Activated CD4-positive, alpha-beta memory T cell treated with anti-CD3 and anti-CD28 coated beads for 36 hours (primary cell): ENCODE measurements at regions of chr10 and their contacts with region 1.

Region 1: DNA sequence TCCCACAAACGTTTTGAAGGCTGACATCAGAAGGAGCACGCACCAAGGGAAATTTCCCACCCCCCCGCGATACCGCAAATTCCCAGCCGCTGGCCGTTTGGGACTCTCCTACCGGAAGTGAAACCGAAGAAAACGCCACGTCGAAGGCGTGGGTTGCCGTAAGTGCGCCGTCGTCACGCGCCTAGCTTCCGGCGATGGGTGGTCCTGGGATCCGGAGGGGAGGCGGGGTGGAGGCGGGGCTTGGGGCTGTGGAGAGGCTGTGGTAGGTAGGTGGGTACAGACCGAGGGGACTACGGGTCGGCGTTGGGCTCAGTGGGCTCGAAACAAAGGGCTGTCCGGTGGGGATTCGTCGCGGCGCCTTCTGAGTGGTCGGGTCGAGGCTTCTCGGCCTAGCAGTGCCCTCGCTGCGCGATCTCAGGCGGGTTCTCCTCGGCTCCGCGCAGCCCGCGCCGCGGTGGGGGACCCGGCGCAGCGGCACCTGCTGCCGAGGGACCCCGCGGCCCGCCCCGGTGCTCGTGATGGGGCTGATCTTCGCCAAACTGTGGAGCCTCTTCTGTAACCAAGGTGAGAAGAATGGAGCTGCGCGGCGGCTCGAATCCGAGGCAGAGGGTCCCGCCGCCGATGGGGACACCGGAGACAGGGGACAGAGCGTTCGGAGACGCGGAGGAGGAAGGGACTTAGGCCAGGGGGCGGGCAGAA is at the start of gene ARL5B:
- DNase-seq: peak; percentile 98
- H3K4me3 Mint-ChIP-seq: peak within 1 kb of the TSS; percentile 95
- H3K27ac Mint-ChIP-seq: peak within 1 kb of the TSS; percentile 92
- H3K4me1 Mint-ChIP-seq: peaks cover 34% of the 10 kb centered on the region
- H3K27me3 Mint-ChIP-seq: no peaks in the 10 kb centered on the region
- total RNA-seq, gene ARL5B: 16.2 to 16.3 TPM

Region 2: GRCh38 chr10:17200912-17201793 is 1458.1 kb before region 1 on chr10 and contains the start of gene TRDMT1:
- CTCF ChIA-PET with region 1: no interaction called
- POLR2A ChIA-PET with region 1: no interaction called
- intact Hi-C with region 1: loop called (anchors 10 kb)
- DNase-seq: peak; percentile 82
- H3K4me3 Mint-ChIP-seq: peak within 1 kb of the TSS; percentile 94
- H3K27ac Mint-ChIP-seq: peak within 1 kb of the TSS; percentile 91
- H3K4me1 Mint-ChIP-seq: peaks cover 46% of the 10 kb centered on the region
- H3K27me3 Mint-ChIP-seq: no peaks in the 10 kb centered on the region
- total RNA-seq, gene TRDMT1: 5.0 to 5.8 TPM

Region 3: DNA sequence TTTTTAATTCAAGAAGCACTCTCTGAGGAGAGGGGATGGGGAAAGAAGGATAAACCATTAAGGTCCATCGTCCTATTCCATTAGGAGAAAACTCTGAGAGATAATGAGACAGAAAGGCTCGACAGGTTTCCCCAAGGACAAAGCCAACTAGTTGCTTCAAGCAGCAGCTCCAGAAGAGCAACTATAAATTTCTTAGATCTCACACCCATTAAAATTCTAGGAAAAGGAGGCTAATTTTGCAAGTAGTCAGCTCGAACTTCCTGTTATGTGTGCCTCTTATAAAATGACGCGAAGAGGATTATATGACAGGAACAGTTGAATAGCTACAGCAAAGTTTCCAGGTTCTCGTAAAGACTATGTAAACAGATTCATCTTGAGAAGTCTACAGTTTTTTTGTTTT is 1152.9 kb before region 1 on chr10:
- CTCF ChIA-PET with region 1: no interaction called
- POLR2A ChIA-PET with region 1: no interaction called
- intact Hi-C with region 1: loop called (anchors 2 kb)
- DNase-seq: no peak
- H3K4me3 Mint-ChIP-seq: peak overlapping the region; percentile 10
- H3K27ac Mint-ChIP-seq: peak overlapping the region; percentile 62
- H3K4me1 Mint-ChIP-seq: peaks cover 41% of the 10 kb centered on the region
- H3K27me3 Mint-ChIP-seq: peaks cover 2% of the 10 kb centered on the region

Region 4: GRCh38 chr10:18195060-18195799 is 464.0 kb before region 1 on chr10:
- CTCF ChIA-PET with region 1: no interaction called
- POLR2A ChIA-PET with region 1: no interaction called
- intact Hi-C with region 1: no loop called
- DNase-seq: no peak
- H3K4me3 Mint-ChIP-seq: no peak overlapping the region
- H3K27ac Mint-ChIP-seq: no peak overlapping the region
- H3K4me1 Mint-ChIP-seq: no peaks in the 10 kb centered on the region
- H3K27me3 Mint-ChIP-seq: peaks cover 3% of the 10 kb centered on the region

Region 5: DNA sequence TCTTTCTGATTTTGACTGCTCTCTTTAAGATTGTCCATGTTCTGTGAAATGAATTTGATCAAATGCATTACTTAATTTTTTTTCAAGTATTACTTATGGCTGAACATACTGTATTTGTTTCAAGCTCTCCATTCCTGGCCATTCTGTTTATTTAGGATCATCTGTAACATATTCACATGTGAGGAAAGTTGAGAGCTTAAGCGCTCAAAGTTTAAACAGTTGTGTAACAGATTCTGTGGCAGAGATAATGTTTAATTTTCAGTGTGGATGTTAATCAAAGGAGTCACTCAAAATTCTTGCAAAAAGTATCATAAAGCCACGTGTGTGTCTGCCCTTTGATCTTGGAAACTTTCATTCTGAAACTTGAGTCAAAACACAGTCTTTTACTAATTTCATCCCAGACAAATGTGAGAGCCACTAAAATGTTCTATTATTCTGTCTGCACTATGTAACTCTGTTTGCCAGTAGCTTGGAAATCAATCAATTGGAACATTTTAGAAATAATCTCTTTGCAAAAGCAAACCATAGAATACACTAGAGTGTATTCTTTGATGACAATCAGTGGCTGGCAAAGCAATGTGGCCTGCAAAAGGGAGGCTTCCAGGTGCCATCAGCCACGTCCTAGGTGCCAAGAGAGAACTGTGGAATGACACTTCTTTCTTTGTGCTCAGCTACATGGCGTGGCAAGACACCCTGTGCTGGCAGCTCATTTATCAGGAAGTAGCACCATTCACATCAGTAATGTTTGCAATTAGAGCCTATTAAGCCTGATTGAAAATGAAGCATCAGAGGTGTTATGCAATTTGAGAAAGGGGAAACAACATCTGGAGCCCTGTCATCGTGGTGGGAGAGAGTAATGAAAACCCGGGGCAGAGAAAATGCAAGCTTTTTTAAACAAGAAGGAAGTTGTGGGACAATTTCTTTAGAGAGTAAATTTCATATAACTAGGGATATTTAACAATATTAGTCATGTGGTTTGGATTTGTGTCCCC is 40.9 kb after region 1 on chr10:
- CTCF ChIA-PET with region 1: no interaction called
- POLR2A ChIA-PET with region 1: no interaction called
- intact Hi-C with region 1: loop called (anchors 1 kb)
- DNase-seq: no peak
- H3K4me3 Mint-ChIP-seq: no peak overlapping the region
- H3K27ac Mint-ChIP-seq: no peak overlapping the region
- H3K4me1 Mint-ChIP-seq: peaks cover 18% of the 10 kb centered on the region
- H3K27me3 Mint-ChIP-seq: no peaks in the 10 kb centered on the region